Left cardiac atrium (tissue), 4 donors: ENCODE measurements at regions of chr9 and their contacts with region 1.

Region 1: DNA sequence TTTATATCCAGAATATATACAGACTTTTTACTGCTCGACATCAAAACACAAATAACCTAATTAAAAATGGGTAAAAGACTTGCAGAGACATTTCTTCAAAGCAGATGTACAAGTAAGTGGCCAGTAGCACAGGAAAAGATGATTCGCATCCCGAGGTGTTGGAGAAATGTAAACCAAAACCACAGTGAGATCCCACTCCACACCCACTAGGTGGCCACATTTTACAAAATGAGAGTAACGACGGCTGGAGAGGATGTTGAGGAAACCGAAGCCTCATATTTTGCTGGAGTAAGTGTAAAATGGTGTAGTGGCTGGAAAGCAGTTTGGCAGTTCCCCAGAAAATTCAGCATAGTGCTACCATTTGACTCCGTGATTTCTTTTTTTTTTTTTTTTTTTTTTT is 21.2 kb upstream of the GBGT1 start:
- DNase-seq: no peak
- ATAC-seq: peak; percentile 76 to 82

Region 2: DNA sequence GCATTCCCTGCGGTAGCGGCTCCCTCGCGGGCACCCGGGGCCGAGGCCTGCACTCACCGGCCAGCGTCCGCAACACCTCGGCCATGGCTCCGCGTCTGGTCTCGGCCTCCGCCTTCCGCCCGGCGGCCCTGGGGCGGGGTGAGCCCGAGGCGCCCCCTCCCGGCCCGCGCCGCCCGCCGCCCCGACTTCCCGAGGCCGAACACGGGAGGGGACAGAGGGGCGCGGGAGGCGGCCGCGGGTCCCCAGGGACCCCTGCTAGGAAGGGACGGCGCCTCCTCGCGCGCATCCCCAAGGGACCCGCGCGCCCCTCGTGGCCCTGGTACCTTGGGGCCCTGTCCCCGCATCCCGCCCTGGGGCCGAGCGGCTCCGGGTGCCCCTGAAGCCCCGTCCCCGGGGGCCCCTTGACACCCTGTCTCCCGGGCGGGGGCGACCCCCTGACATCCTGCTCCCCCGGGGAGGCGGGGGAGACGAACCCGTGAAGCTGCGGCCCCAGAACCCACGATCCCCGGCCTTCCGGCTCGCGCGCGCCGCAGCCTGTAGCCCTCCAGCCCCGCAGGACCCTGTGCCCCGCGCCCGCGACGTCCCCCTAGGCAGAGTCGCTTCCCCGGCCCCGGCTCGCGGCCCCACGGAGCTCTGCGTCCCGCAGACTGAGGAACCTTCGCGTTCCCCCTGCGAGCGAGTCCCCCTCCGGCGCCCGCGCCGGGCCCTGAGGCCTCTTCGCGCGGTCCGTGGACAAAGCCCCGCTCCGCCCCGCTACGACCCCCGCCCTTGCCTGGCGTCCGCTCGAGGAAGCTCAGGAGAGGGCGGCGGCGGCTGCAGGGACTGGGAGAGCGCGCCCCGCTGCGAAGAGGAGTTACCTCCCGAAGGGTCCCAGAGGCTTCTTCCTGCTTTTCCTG is 90.4 kb after region 1 on chr9 and contains the start of gene ABO:
- intact Hi-C with region 1: loop called (anchors 5 to 10 kb)
- DNase-seq: peak; percentile 37
- ATAC-seq: peak; percentile 84 to 87
- total RNA-seq, gene ABO: 1.7 to 2.1 TPM

Region 3: DNA sequence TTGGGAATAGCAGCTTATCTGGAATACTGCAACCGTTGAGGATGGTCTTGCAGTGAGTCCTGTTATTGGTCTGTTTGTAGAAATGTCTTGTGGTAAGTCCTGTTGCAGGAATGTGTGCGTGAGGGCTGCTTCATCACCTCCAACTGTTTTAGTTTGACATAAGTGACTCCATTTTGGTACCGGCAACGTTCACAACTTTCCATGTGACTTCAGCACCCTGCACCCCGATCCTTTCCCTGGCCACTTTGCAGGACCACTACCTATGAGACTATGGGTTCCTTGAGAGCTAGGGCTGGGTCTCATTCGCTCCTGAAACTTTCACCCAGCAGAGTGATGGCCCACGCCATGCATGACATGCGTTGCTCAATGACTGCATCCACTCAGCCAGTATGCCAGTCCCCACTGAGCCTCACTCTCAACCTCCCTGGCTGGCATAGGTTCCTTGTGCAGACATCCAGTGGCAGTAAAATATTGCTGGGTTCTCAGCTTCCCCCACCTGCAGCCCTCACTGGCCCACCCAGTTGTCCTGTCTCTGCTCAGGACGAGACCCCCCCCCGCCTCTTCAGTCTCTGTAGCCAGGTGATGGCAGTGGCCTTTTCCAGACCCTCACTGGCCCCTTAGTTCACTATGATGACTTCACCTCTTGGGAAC is 143.0 kb after region 1 on chr9:
- intact Hi-C with region 1: loop called (anchors 5 kb)
- DNase-seq: no peak
- ATAC-seq: no peak

Region 4: DNA sequence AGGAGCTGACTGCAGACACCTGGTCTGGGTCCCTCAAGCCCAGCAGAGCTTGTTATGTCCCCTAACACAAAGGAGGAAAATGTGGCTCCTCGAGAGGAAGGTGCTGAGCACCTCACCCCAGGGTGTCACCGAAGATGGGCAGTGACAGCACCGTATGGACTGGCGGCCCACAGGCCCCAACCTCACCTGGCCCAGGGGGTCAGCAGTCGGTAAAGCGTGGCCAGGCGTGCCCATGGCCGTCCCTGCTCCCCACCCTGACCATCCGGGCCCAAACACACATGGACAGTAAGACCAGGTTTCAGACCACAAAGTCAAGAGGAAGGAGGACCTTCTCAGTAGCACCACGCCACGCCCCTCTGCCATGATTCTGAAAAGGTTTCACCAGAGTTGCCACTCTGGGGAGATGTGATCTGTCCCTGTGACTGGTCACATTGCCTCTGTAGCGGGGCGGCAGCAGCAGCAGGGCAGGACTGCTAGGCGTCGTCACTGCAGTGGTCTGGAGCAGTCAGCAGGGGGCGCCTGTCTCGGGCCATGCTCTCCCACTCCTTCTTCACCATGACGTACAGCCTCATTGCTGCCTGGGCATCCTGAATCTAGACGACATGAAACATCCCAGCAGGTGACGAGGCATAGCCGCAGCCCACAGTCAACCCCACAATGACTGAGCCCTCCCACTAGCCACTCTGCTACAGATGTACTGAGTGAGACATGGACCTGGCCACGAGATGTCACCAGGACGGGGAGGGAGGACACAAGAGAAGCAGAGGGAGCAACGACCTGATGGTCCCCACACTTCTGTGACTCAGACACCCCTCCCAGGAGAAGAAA is 221.7 kb after region 1 on chr9:
- intact Hi-C with region 1: no loop called
- DNase-seq: peak; percentile 75
- ATAC-seq: peak; percentile 74 to 82

Region 5: DNA sequence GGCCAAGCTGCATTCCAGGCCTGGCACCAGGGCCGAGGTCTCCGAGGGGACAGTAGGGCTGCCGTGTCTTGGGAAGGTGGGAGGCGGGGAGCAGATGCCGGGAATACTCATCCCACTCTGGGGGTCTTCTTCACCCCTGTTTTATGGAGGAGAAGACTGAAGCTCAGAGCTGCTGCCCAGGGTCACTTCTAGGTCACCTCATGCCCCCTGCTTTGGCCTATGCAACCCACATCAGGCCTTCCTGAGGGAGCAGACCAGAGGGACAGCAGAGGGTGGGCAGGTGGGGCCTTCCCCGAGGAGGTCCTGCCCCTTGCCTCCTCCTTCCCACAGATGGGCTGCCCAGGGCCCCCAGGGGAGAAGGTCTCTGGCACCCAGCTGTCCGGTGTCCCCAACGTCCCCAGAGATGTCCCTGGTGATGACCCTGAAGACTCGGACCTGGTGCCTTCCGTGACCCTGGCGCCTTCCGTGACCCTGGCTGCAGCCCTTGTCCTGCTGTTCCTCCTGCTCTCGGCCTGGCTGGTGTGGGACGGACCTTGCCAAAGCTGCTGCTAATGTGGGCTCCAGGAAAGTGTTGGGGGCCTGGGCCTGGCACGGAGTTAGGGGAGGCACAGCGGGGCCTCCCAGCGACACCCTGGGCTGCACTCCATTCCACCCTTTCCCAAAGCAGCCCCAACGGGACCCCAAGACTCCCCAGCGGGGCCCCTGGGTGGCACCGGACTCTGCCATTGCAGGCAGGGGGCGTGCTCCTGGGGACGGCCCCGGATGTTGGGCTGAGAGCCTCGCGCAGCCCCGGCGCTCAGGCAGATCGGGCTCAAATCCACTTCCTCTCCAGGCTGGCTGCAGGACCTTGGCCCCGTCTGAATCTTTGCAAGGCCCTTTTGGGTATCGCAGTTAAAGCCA is 300.6 kb after region 1 on chr9:
- intact Hi-C with region 1: loop called (anchors 2 to 5 kb)
- DNase-seq: peak; percentile 20
- ATAC-seq: peak in 1 of 2 donors; percentile 5